Right ventricle myocardium inferior (tissue), 1 donor: ENCODE measurements at regions of chr2 and their contacts with region 1.

Region 1: GRCh38 chr2:44361330-44362206 is at the starts of genes CAMKMT and PREPL:
- DNase-seq: peak; percentile 99
- ATAC-seq: peak; percentile 98
- total RNA-seq, gene CAMKMT: 4.6 TPM
- total RNA-seq, gene PREPL: 76.7 TPM

Region 2: GRCh38 chr2:44167940-44168680 is 193.5 kb before region 1 on chr2:
- intact Hi-C with region 1: loop called (anchors 5 kb)
- DNase-seq: peak; percentile 99
- ATAC-seq: peak; percentile 95

Region 3: DNA sequence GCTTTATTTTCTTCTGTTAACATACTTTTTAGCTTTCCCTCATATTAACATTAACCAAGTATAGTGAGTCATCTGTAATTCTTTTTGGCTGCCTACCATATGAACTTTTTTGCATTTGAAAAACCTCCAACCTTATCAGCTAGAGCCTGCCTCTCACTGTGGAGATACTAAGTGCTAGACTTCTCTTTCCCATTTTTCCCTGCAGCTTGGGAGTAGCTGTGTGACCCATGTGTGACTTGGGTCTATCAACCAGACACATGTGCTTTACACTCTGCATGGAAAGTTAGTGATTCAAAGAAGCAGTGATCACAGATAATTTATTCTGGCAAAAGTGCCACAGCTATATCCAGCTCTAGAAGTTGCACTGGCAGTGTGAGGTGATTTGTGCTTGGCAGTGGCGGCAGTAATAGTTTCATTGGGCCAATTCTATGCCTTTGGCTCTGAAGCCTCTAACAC is 36.6 kb before region 1 on chr2:
- intact Hi-C with region 1: loop called (anchors 5 kb)
- DNase-seq: no peak
- ATAC-seq: peak; percentile 85